PC-9 (cell line): ENCODE measurements at regions of chr5 and their contacts with region 1.

Region 1: DNA sequence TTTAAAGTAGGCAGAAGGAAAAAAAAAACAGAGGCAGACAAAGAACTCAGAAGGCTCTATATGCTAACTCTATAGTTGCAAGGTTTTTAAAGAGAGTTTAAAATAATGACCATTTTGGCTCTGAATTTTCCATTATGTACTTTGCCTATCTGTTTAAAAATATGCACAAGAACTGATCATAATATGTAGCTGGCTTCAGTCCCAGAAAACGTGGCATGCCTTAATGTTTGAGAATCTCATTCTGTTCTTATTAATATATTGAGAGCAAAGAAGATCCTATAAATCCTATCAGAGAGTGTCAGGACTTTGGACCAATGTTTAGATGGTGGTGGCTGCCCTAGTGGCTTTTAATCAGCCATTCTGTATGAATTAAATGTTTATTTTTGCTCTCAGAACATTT is 121.5 kb downstream of the JMY start:
- DNase-seq: no peak
- H3K4me3 ChIP-seq: no peak overlapping the region
- H3K27ac ChIP-seq: no peak overlapping the region
- H3K4me1 ChIP-seq: no peaks in the 10 kb centered on the region
- H3K27me3 ChIP-seq: no peaks in the 10 kb centered on the region
- CTCF ChIP-seq: no peak

Region 2: DNA sequence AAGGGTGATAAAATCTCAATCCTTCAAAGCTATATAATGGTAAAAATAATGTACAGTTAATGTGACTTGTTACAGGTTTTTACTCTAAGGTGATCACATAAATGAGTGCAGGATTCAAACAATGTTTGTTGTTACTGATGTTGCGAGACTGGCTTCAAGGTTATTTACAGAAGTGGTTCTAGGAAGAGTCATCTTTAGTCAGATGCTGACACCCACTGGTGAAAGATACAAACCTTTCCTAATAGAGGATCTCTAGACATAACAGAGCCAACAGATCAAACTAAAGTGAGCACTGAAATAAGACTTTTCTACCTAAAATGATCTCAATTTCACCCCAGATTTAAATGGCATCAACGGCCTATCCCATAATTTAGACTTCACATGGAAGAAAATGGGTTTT is 392.5 kb before region 1 on chr5:
- CTCF ChIA-PET with region 1: no interaction called
- POLR2A ChIA-PET with region 1: no interaction called
- intact Hi-C with region 1: no loop called
- DNase-seq: peak in 1 of 2 experiments; percentile 55
- H3K4me3 ChIP-seq: no peak overlapping the region
- H3K27ac ChIP-seq: no peak overlapping the region
- H3K4me1 ChIP-seq: no peaks in the 10 kb centered on the region
- H3K27me3 ChIP-seq: no peaks in the 10 kb centered on the region
- CTCF ChIP-seq: peak; percentile 70

Region 3: GRCh38 chr5:81213070-81213469 is 1855.7 kb after region 1 on chr5:
- CTCF ChIA-PET with region 1: no interaction called
- POLR2A ChIA-PET with region 1: interaction called, 13 read pairs
- intact Hi-C with region 1: no loop called
- DNase-seq: peak; percentile 31 to 66
- H3K4me3 ChIP-seq: no peak overlapping the region
- H3K27ac ChIP-seq: no peak overlapping the region
- H3K4me1 ChIP-seq: peaks cover 24% of the 10 kb centered on the region
- H3K27me3 ChIP-seq: no peaks in the 10 kb centered on the region
- CTCF ChIP-seq: no peak